ENCODE measurements at regions of chr5 and their contacts with region 1.

Region 1: GRCh38 chr5:41843456-41844370 is 26.5 kb downstream of the OXCT1 start:
- DNase-seq: peak; percentile 31 to 71 (median 38)
- ATAC-seq: peak; percentile 89
- H3K4me3 ChIP-seq: no peak overlapping the region
- H3K27ac ChIP-seq: no peak overlapping the region
- H3K4me1 ChIP-seq: no peaks in the 10 kb centered on the region
- H3K27me3 ChIP-seq: no peaks in the 10 kb centered on the region
- CTCF ChIP-seq: peak; percentile 71 to 92 (median 73)
- EP300 ChIP-seq: no peak
- POLR2A ChIP-seq: no peak
- RAD21 ChIP-seq: peak; percentile 91 to 95

Region 2: GRCh38 chr5:41707853-41708603 is 135.7 kb before region 1 on chr5:
- CTCF ChIA-PET with region 1: interaction called, 9 read pairs
- POLR2A ChIA-PET with region 1: no interaction called
- in situ Hi-C with region 1: no loop called
- intact Hi-C with region 1: loop called (anchors 1 kb)
- DNase-seq: peak in 2 of 4 experiments; percentile 29 to 31
- ATAC-seq: peak; percentile 89
- H3K4me3 ChIP-seq: no peak overlapping the region
- H3K27ac ChIP-seq: no peak overlapping the region
- H3K4me1 ChIP-seq: no peaks in the 10 kb centered on the region
- H3K27me3 ChIP-seq: no peaks in the 10 kb centered on the region; a peak in 1 of 5 replicates
- CTCF ChIP-seq: peak; percentile 36 to 57 (median 41); a peak in 3 of 6 replicates
- EP300 ChIP-seq: no peak
- POLR2A ChIP-seq: no peak
- RAD21 ChIP-seq: peak; percentile 42 to 80; a peak in 3 of 4 replicates

Region 3: DNA sequence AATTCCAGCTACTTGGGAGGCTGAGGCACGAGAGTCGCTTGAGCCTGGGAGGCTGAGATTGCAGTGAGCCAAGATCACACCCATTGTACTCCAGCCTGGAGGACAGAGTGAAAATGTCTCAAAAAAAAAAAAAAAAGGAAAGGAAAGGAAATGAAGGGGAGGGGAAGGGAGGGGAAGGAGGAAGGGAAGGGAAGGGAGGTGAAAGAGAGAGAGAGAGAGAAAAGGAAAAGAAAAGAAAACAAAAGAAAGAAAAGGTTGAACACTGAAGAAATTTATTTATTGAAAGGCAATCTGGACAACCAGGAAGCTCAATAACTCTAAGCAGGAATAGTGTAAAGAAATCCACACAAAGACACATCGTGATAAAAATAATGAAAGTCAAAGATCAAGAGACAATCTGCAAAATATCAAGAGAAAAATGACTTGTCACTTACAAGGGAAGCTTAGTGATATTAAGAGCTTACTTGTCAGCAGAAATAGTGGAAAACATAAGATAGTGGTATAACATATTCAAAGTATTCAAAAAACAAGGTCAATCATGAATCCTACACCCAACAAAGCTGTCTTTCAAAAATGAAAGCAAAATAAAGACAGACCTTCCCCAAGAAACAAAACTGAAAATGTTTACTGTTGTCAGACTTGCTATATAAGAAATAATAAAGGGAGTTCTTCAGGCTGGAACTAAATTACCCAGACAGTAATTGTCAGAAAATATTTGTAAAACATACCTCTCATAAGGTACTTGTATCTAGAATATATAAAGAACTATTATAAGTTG is 49.5 kb after region 1 on chr5:
- CTCF ChIA-PET with region 1: no interaction called
- POLR2A ChIA-PET with region 1: no interaction called
- in situ Hi-C with region 1: no loop called
- intact Hi-C with region 1: no loop called
- DNase-seq: no peak
- ATAC-seq: no peak
- H3K4me3 ChIP-seq: no peak overlapping the region
- H3K27ac ChIP-seq: no peak overlapping the region
- H3K4me1 ChIP-seq: peaks cover 7 to 18% of the 10 kb centered on the region in 2 experiments; a peak in 4 of 5 replicates
- H3K27me3 ChIP-seq: no peaks in the 10 kb centered on the region
- CTCF ChIP-seq: no peak
- EP300 ChIP-seq: no peak
- POLR2A ChIP-seq: no peak
- RAD21 ChIP-seq: no peak

Measured in K562 (cell line).